Mammary epithelial cell (primary cell): ENCODE measurements at regions of chr7 and their contacts with region 1.

Region 1: DNA sequence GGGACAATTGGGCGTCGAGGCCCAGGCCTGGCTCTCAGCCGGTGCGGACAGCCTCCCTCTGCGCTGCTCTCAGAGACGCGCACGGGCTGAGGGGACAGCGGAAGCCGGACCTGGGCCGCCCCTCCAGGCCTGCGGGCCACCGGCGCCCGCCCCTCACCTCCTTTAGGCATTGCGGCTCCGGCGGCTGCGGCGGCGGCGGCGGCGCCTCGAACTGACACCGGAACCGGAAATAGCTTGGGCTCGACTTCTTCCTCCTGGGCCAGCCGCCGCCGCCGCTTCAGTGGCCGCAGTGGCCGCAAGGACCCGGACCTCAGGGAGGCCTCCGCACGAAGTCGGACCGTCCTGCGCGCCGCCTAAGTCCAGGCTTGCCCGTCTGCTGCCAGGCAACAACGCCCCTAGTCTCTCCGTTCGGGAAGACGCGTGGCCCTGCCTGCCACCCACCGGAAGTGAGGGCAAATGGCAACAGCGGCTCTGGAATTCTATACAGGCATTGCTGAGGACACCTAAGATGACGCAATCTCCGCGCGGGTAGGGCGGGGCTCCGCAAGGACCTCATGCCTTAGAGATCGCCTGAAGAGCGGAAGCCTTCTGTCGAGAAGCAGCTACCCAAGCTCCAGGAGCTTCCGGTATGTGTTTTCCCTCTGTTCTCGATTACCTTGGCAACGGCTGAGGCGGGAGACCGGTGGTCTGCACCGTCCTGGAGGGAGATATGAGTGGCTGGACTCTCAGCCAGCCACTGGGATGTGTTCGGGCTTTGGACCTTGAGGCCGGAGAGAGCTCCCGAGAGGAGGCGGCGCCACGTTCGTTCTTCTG is at the starts of genes BUD31 and PDAP1:
- DNase-seq: peak; percentile 92
- H3K4me3 ChIP-seq: peak within 1 kb of the TSS; percentile 93 to 97 (median 96)
- H3K27ac ChIP-seq: peak within 1 kb of the TSS; percentile 88
- H3K4me1 ChIP-seq: peaks cover 33% of the 10 kb centered on the region
- H3K27me3 ChIP-seq: no peaks in the 10 kb centered on the region
- CTCF ChIP-seq: peak in 1 of 2 donors; percentile 10
- total RNA-seq, gene BUD31: 52.3 to 140 TPM
- total RNA-seq, gene PDAP1: 23.0 to 182 TPM

Region 2: GRCh38 chr7:99374103-99375064 is 34.2 kb before region 1 on chr7 and contains the start of gene ARPC1B:
- CTCF ChIA-PET with region 1: no interaction called
- dilution Hi-C with region 1: no loop called
- in situ Hi-C with region 1: no loop called
- intact Hi-C with region 1: loop called (anchors 1 kb)
- DNase-seq: peak; percentile 71
- H3K4me3 ChIP-seq: peak within 1 kb of the TSS; percentile 64 to 82 (median 79)
- H3K27ac ChIP-seq: peak within 1 kb of the TSS; percentile 53
- H3K4me1 ChIP-seq: peaks cover 27% of the 10 kb centered on the region
- H3K27me3 ChIP-seq: no peaks in the 10 kb centered on the region
- CTCF ChIP-seq: no peak
- total RNA-seq, gene ARPC1B: 196 to 228 TPM

Region 3: DNA sequence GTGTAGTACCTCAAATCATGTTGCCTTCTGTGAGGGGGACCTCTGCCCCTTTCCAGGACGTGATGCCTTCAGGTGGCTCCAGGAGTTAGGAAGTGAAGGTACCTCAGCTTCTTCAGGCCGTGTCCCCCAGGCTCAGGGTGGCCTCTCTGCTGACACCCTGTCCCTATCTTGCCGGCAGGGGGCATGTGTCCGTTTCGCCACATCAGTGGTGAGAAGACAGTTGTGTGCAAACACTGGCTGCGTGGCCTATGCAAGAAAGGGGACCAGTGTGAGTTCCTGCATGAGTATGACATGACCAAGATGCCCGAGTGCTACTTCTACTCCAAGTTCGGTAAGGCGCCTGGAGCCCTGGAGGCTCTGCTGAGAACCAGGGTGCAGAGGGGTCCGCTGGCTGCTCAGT is 39.4 kb after region 1 on chr7:
- CTCF ChIA-PET with region 1: no interaction called
- dilution Hi-C with region 1: loop called (anchors 5 kb)
- in situ Hi-C with region 1: no loop called
- intact Hi-C with region 1: no loop called
- DNase-seq: no peak
- H3K4me3 ChIP-seq: no peak overlapping the region
- H3K27ac ChIP-seq: no peak overlapping the region
- H3K4me1 ChIP-seq: no peaks in the 10 kb centered on the region
- H3K27me3 ChIP-seq: no peaks in the 10 kb centered on the region
- CTCF ChIP-seq: no peak

Region 4: GRCh38 chr7:99459087-99459486 is 50.5 kb after region 1 on chr7:
- CTCF ChIA-PET with region 1: no interaction called
- dilution Hi-C with region 1: no loop called
- in situ Hi-C with region 1: no loop called
- intact Hi-C with region 1: no loop called
- DNase-seq: no peak
- H3K4me3 ChIP-seq: no peak overlapping the region
- H3K27ac ChIP-seq: no peak overlapping the region
- H3K4me1 ChIP-seq: peaks cover 14% of the 10 kb centered on the region
- H3K27me3 ChIP-seq: no peaks in the 10 kb centered on the region
- CTCF ChIP-seq: peak in 1 of 2 donors; percentile 36